Left ventricle myocardium inferior (tissue), 1 donor: ENCODE measurements at regions of chr5 and their contacts with region 1.

Region 1: GRCh38 chr5:75511435-75512384 is at the starts of genes CERT1 and POLK:
- DNase-seq: peak; percentile 98
- H3K4me3 ChIP-seq: peak within 1 kb of the TSS; percentile 89
- H3K27ac ChIP-seq: peak within 1 kb of the TSS; percentile 95
- H3K4me1 ChIP-seq: peaks cover 55% of the 10 kb centered on the region
- H3K27me3 ChIP-seq: no peaks in the 10 kb centered on the region
- CTCF ChIP-seq: no peak
- total RNA-seq, gene CERT1: 28.8 TPM
- total RNA-seq, gene POLK: 21.1 TPM

Region 2: GRCh38 chr5:75558981-75559632 is 47.4 kb after region 1 on chr5:
- intact Hi-C with region 1: loop called (anchors 5 kb)
- DNase-seq: no peak
- H3K4me3 ChIP-seq: no peak overlapping the region
- H3K27ac ChIP-seq: peak overlapping the region; percentile 77
- H3K4me1 ChIP-seq: peaks cover 12% of the 10 kb centered on the region
- H3K27me3 ChIP-seq: no peaks in the 10 kb centered on the region
- CTCF ChIP-seq: no peak